CD14-positive monocyte (primary cell): ENCODE measurements at regions of chr2 and their contacts with region 1.

Region 1: DNA sequence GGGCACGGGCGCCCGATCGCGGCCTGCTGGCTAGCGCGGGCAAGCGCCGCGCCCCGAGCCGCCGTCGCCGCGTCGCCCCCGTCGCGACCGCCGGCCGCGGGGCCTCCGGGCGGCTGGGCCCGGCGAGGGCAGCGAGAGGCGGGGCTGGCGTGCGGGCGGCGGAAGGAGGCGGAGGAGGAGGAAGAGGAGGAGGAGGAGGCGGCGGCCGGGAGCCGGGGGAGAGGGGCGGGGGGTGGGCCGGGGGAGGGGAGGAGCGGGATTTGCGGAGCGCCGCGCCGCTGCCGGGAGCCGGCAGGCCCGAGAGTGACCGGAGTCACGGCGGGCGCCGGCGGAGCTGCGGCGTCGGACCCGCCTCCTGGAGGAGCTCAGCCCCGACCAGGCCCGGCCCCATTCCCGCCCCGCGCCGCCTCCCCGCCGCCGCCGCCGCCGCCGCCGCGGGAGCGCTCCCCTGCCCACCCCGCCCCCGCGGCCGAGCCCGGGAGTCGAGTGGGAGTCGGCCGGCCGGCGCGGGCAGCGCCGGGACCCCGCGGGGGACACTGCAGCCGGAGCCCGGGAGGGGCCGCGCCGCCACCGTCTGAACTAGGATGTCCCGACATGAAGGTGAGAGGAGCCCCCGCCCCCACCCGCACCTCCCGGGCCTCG is at the start of gene KCMF1:
- DNase-seq: peak; percentile 29 to 56 (median 39)
- H3K4me3 ChIP-seq: peak within 1 kb of the TSS; percentile 81 to 93 (median 90)
- H3K4me3 Mint-ChIP-seq: peak within 1 kb of the TSS; percentile 94 to 100
- H3K27ac ChIP-seq: peak within 1 kb of the TSS; percentile 89 to 98
- H3K27ac Mint-ChIP-seq: peak within 1 kb of the TSS; percentile 94 to 99 (median 98)
- H3K4me1 ChIP-seq: peaks cover 46 to 63% of the 10 kb centered on the region in 2 donors
- H3K4me1 Mint-ChIP-seq: peaks cover 58% of the 10 kb centered on the region
- H3K27me3 ChIP-seq: no peaks in the 10 kb centered on the region
- H3K27me3 Mint-ChIP-seq: no peaks in the 10 kb centered on the region
- CTCF ChIP-seq: no peak
- polyA plus RNA-seq, gene KCMF1: 22.5 to 52.9 (median 28.5) TPM

Region 2: DNA sequence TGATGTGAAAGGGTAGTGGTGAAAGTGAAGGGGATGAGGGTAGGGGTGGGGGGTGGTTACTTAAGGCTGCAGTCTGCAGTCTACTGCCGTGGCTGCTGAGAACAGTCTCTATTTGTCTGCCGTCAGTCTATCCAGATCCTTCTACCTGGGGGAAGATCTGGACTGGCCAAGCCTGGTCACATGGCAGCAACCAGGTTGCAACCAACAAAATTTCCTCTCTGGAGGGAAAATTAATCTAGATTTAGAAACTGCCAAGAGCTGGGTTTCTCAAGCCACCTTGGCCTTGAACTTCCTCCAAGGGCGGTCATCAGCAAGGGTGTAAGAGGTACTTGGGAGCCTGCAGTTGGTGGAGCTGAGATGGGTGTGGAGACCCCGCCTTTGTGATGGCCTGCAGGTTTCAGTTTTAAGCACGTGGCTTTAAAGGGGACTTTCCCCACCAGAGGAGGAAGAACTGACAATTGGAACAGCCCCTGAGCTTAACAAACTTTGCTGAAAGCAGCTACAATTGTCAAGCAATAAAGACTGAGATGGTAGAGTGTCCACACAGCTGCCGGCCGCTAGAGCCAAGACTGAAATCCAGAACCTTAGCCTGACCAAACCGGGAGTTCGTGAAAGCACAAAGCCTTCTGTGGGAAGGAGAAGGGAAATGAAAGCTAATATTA is 31.4 kb before region 1 on chr2:
- intact Hi-C with region 1: loop called in 1 of 2 experiments (anchors 5 kb)
- DNase-seq: peak; percentile 70 to 93 (median 86)
- H3K4me3 ChIP-seq: peak overlapping the region; percentile 10 to 64 (median 17)
- H3K4me3 Mint-ChIP-seq: peak overlapping the region; percentile 52 to 89
- H3K27ac ChIP-seq: peak overlapping the region; percentile 84
- H3K27ac Mint-ChIP-seq: peak overlapping the region; percentile 92 to 98 (median 95)
- H3K4me1 ChIP-seq: peaks cover 38 to 52% of the 10 kb centered on the region in 2 donors
- H3K4me1 Mint-ChIP-seq: peaks cover 47% of the 10 kb centered on the region
- H3K27me3 ChIP-seq: no peaks in the 10 kb centered on the region
- H3K27me3 Mint-ChIP-seq: peaks cover 0 to 5% (median 2%) of the 10 kb centered on the region in 3 donors
- CTCF ChIP-seq: no peak

Region 3: GRCh38 chr2:85009019-85009618 is 38.1 kb after region 1 on chr2:
- intact Hi-C with region 1: loop called in 1 of 2 experiments (anchors 5 kb)
- DNase-seq: peak; percentile 54 to 80 (median 72)
- H3K4me3 ChIP-seq: no peak overlapping the region
- H3K4me3 Mint-ChIP-seq: peak overlapping the region in 1 of 2 donors; percentile 51
- H3K27ac ChIP-seq: peak overlapping the region; percentile 42 to 61
- H3K27ac Mint-ChIP-seq: peak overlapping the region; percentile 72 to 89 (median 87)
- H3K4me1 ChIP-seq: peaks cover 42 to 56% of the 10 kb centered on the region in 2 donors
- H3K4me1 Mint-ChIP-seq: peaks cover 59% of the 10 kb centered on the region
- H3K27me3 ChIP-seq: no peaks in the 10 kb centered on the region
- H3K27me3 Mint-ChIP-seq: peaks cover 0 to 1% (median 0%) of the 10 kb centered on the region in 3 donors
- CTCF ChIP-seq: no peak